ENCODE measurements at regions of chr12 and their contacts with region 1.

Region 1: GRCh38 chr12:120580787-120581723 is at the start of gene POP5:
- DNase-seq: peak; percentile 96
- ATAC-seq: peak; percentile 95
- H3K4me3 ChIP-seq: peak within 1 kb of the TSS; percentile 67
- H3K27ac ChIP-seq: peak within 1 kb of the TSS; percentile 62
- H3K4me1 ChIP-seq: no peaks in the 10 kb centered on the region
- H3K27me3 ChIP-seq: peaks cover 10% of the 10 kb centered on the region; the same call in 1 of the 2 replicates
- CTCF ChIP-seq: no peak
- POLR2A ChIP-seq: no peak
- RAD21 ChIP-seq: no peak
- total RNA-seq, gene POP5: 66.1 and 69.5 TPM in 2 replicates

Region 2: DNA sequence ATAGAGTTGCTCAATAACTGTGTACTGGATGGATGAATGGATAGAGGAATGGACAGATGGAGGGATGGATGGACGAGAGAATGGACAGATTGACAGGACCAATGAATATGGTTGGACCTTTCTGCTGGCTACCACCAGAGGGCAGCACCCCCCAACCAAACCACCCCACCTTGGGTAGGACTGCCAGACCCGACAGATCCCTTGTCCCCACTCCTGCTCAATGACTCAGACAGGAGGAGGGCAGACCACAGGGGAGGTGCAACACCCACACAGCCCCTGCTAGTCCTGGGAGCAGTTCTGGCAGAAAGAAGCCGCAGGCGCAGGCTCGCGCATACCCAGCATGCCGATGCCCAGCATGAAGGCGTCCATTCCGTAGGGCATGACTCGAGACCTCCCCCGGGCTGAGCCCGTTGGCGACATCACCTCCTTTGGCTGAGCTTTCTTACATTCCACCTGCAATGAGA is 224.5 kb before region 1 on chr12:
- CTCF ChIA-PET with region 1: interaction called, 11 read pairs
- POLR2A ChIA-PET with region 1: no interaction called
- dilution Hi-C with region 1: no loop called
- in situ Hi-C with region 1: no loop called
- intact Hi-C with region 1: no loop called
- DNase-seq: peak; percentile 81
- ATAC-seq: peak; percentile 93
- H3K4me3 ChIP-seq: no peak overlapping the region
- H3K27ac ChIP-seq: no peak overlapping the region
- H3K4me1 ChIP-seq: no peaks in the 10 kb centered on the region
- H3K27me3 ChIP-seq: peaks cover 26% of the 10 kb centered on the region
- CTCF ChIP-seq: peak; percentile 91
- POLR2A ChIP-seq: no peak
- RAD21 ChIP-seq: peak; percentile 90

Region 3: DNA sequence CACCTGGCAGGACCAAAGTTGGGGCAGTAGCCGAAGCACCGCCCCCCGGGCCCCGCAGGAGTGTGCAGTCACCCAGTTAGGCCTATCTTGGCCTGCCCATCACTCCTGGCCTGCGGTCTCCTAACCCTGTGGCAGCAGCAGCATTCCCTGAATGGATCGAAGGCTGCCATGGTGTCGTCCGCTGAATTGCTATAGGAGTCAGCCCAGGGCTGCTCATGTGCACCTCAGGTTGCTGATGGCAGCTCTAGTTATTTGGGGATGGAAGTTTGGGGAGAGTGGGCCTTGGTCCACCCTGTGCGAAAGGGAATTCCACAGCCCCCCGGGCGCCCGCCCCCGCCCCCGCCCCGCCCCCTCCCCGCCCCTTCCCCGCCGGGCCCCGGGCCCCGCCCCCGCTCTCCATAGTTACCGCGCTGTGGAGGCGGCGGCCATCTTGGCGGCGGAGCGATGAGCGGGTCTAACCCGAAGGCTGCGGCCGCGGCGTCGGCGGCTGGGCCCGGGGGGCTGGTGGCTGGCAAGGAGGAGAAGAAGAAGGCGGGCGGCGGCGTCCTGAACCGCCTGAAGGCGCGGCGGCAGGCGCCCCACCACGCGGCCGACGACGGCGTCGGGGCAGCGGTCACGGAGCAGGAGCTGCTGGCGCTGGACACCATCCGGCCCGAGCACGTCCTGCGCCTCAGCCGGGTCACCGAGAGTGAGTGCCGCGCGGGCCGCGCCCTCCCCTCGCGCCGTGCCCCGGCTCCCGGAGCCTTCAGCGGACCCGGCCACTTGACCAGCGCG is 129.2 kb after region 1 on chr12 and contains the start of gene UNC119B:
- CTCF ChIA-PET with region 1: no interaction called
- POLR2A ChIA-PET with region 1: no interaction called
- dilution Hi-C with region 1: no loop called
- in situ Hi-C with region 1: loop called (anchors 5 kb)
- intact Hi-C with region 1: loop called (anchors 1 kb)
- DNase-seq: peak; percentile 33
- ATAC-seq: peak; percentile 93
- H3K4me3 ChIP-seq: peak within 1 kb of the TSS; percentile 93
- H3K27ac ChIP-seq: peak within 1 kb of the TSS; percentile 83
- H3K4me1 ChIP-seq: peaks cover 3% of the 10 kb centered on the region
- H3K27me3 ChIP-seq: no peaks in the 10 kb centered on the region
- CTCF ChIP-seq: no peak
- POLR2A ChIP-seq: peak; percentile 39; the same call in 1 of the 2 replicates
- RAD21 ChIP-seq: no peak
- total RNA-seq, gene UNC119B: 8.4 and 10.3 TPM in 2 replicates

Region 4: DNA sequence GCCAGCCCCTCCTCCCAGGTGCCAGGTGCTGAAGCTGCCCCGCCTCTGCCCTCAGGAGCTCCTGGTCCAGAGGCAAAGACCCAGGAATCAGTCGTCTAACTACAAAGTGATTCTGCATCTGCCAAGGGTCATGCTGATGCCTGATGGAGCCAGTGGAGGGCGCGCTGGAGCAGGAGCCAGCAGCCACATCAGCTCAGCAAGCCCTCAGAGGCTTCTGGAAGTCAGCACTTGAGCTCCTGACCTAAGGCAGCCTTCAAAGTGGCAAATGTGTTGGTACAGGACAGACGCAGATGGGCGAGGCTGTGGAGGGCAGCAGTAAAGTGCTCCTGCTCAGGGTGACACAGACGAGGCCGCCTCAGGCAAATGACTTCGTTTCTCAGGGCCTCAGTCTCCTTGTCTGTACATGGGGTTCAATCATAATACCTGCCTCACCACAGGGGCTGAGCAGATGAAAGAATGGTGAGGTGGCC is 424.3 kb after region 1 on chr12:
- CTCF ChIA-PET with region 1: no interaction called
- POLR2A ChIA-PET with region 1: no interaction called
- dilution Hi-C with region 1: no loop called
- in situ Hi-C with region 1: no loop called
- intact Hi-C with region 1: loop called (anchors 5 kb)
- DNase-seq: peak; percentile 23
- ATAC-seq: peak; percentile 79
- H3K4me3 ChIP-seq: no peak overlapping the region
- H3K27ac ChIP-seq: no peak overlapping the region
- H3K4me1 ChIP-seq: no peaks in the 10 kb centered on the region
- H3K27me3 ChIP-seq: no peaks in the 10 kb centered on the region
- CTCF ChIP-seq: peak; percentile 61
- POLR2A ChIP-seq: no peak
- RAD21 ChIP-seq: peak; percentile 58

Region 5: DNA sequence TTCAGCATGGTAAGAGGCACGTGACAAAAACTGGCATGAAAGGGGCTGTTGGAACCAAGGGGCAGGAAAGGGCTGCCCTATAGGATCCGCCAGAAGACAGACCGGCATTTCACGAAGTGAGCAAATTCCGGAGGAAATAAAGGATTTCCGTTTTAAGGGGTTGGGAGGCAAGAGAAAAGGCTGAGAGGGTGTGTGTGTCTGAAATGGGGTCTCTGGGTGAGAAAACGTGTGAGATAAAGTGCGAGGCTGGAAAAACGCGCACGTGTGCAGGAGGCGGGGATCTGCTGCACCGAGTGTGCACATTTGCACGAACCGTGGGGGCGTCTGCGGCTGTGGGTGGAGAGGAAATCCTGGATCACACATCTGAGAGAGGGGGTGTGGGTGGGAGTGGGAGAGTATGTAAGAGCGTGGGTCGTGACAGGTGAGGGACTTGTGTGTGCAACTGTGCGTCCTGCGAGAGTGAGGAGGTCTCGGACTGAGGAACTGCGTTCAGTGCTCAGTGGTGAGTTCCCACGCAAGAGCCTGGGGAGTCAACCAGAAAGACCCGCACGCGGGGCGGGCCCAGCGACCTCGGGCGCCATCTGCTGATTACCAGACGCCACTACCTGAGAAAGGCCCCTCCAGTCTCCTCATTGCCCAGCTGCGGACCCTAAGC is 514.6 kb after region 1 on chr12:
- CTCF ChIA-PET with region 1: interaction called, 3 read pairs
- POLR2A ChIA-PET with region 1: no interaction called
- dilution Hi-C with region 1: no loop called
- in situ Hi-C with region 1: no loop called
- intact Hi-C with region 1: loop called (anchors 2 kb)
- DNase-seq: peak; percentile 35
- ATAC-seq: peak; percentile 99
- H3K4me3 ChIP-seq: peak overlapping the region; percentile 24; the same call in 1 of the 2 replicates
- H3K27ac ChIP-seq: no peak overlapping the region
- H3K4me1 ChIP-seq: peaks cover 2% of the 10 kb centered on the region; the same call in 1 of the 2 replicates
- H3K27me3 ChIP-seq: peaks cover 15% of the 10 kb centered on the region
- CTCF ChIP-seq: peak; percentile 74
- POLR2A ChIP-seq: no peak
- RAD21 ChIP-seq: peak; percentile 66

Measured in IMR-90 (cell line).